AG04449 (cell line): ENCODE measurements at regions of chr17 and their contacts with region 1.

Region 1: DNA sequence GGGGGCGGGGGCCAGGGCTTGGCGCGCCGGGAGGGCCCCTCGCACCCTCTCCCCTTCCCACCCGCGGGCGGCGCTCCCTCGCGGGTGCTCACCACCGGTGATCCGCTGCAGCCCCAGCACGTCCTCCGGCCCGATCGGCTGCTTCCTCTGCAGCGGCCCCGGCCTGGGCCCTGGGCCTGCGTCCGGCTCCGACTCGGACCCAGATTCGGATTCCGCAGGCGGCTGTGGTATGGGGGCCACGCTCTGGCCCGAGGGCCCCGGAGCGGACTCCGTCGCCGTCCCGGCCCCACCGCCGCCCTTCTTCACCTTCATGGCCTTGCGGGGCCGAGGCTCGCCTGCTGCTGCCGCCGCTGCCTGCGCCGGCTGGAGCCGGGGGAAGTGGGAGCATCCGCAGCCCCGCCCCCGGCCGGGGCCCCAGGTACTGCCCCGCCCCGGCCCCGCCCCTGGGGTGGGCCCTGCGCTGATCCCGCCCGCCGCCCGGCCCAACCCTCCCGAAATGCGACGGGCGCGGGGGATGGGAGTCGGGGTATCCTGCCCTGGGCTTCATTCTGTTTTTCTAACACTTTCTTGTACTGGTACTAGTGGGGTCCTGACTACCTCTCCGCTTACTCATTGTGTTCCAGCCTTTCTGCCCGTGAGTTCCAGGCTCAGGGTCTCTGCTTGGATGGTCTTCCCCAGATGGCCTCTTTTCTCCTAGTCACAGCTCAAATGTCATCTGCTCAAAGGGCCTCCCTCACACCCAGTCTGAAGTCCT is at the start of gene UNC119:
- DNase-seq: no peak
- H3K4me3 ChIP-seq: peak within 1 kb of the TSS; percentile 75
- CTCF ChIP-seq: no peak

Region 2: GRCh38 chr17:28494445-28495188 is 57.8 kb before region 1 on chr17:
- CTCF ChIA-PET with region 1: interaction called, 77 read pairs
- POLR2A ChIA-PET with region 1: no interaction called
- DNase-seq: no peak
- H3K4me3 ChIP-seq: no peak overlapping the region
- CTCF ChIP-seq: peak; percentile 97

Region 3: DNA sequence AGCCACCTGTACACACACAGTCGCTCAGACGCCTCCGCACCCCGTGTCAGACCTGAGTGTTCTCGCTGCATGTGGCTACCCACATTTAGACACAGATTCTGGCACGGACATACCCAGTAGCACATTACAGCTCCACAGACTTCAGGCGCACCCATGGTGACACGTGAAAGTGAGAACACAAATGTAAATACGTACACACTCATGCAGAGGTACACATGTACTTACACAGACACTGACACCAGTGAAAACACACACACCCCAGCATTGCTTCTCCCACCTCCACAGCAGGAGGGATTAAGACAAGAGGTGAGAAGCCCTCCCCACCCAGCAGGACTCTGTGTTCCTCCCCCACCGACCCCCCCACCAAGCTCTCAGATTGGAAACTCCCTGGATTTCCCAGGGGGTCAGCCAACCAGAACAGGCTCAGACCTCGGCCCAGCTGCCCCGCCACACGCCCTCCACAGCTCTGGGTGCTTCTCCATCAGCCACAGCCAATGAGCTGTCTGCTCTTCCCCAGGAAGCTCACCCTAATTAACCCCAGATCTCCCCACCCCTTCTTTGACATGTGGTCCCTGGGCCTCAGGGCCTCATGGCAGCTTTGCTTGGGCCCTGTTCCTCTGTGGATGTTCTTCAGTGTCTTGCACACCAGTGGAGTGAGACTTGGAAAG is 51.6 kb before region 1 on chr17:
- CTCF ChIA-PET with region 1: interaction called, 77 read pairs
- POLR2A ChIA-PET with region 1: interaction called, 3 read pairs
- DNase-seq: no peak
- H3K4me3 ChIP-seq: no peak overlapping the region
- CTCF ChIP-seq: no peak

Region 4: GRCh38 chr17:28524476-28525368 is 27.7 kb before region 1 on chr17:
- CTCF ChIA-PET with region 1: interaction called, 33 read pairs
- POLR2A ChIA-PET with region 1: no interaction called
- DNase-seq: peak; percentile 38
- H3K4me3 ChIP-seq: no peak overlapping the region
- CTCF ChIP-seq: no peak

Region 5: DNA sequence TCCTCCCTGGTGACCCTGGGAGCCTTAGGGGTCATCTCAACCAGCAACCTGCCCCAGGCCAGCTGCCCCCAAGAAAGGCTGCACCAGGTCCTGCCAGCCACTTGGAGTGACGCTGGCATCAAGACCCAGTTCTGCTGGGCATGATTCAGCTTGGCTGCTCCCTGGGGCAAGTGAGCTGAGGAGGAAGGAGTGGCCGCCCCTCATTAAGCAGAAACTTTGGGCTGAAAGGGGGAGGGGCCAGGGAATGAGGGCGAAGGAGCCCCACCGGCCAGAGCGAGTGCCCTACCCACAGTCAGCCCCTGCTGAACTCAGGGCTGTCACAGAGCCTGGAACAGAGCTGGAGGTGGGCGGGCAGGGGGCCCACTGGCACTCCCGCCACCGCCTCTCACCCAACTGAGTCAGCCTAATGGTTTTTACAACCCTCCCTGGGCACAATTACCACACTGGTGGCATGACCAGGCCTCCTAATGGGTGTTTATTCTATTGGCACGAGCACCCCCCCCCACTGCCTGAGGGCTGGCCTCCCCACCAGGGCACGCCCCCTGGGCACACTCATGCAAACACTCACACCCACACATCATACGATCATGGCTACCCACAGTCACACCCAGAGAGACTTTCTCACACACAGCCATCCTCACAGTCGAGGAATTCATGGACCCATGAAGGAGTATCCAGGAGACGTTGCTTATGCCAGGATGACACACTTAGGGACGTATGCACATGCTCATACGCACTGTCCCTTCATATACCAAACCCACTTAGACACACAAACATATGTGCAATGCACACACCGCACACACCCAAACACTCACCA is 19.2 kb before region 1 on chr17:
- CTCF ChIA-PET with region 1: interaction called, 107 read pairs
- POLR2A ChIA-PET with region 1: no interaction called
- DNase-seq: no peak
- H3K4me3 ChIP-seq: no peak overlapping the region
- CTCF ChIP-seq: no peak

Region 6: GRCh38 chr17:28571255-28572122 is 19.1 kb after region 1 on chr17 and contains the start of gene PIGS:
- CTCF ChIA-PET with region 1: interaction called, 38 read pairs
- POLR2A ChIA-PET with region 1: interaction called, 6 read pairs
- DNase-seq: peak; percentile 45
- H3K4me3 ChIP-seq: peak within 1 kb of the TSS; percentile 88
- CTCF ChIP-seq: no peak

Region 7: GRCh38 chr17:28612936-28613872 is 60.8 kb after region 1 on chr17:
- CTCF ChIA-PET with region 1: interaction called, 14 read pairs
- POLR2A ChIA-PET with region 1: no interaction called
- DNase-seq: no peak
- H3K4me3 ChIP-seq: no peak overlapping the region
- CTCF ChIP-seq: peak; percentile 69